Gastrocnemius medialis (tissue), 4 donors: ENCODE measurements at regions of chr1 and their contacts with region 1.

Region 1: GRCh38 chr1:117534995-117535467 is 70.8 kb upstream of the TENT5C start:
- DNase-seq: peak in 1 of 2 donors; percentile 22
- ATAC-seq: peak; percentile 92 to 96
- H3K4me3 ChIP-seq: no peak overlapping the region
- H3K27ac ChIP-seq: no peak overlapping the region
- H3K4me1 ChIP-seq: peaks cover 4% of the 10 kb centered on the region in 2 donors
- H3K27me3 ChIP-seq: no peaks in the 10 kb centered on the region
- CTCF ChIP-seq: peak; percentile 58 to 78 (median 76)
- POLR2A ChIP-seq: no peak

Region 2: GRCh38 chr1:116806245-116806644 is 728.8 kb before region 1 on chr1:
- in situ Hi-C with region 1: no loop called
- intact Hi-C with region 1: no loop called
- DNase-seq: no peak
- ATAC-seq: no peak
- H3K4me3 ChIP-seq: no peak overlapping the region
- H3K27ac ChIP-seq: no peak overlapping the region
- H3K4me1 ChIP-seq: peaks cover 0 to 8% of the 10 kb centered on the region in 2 donors
- H3K27me3 ChIP-seq: no peaks in the 10 kb centered on the region
- CTCF ChIP-seq: no peak
- POLR2A ChIP-seq: no peak

Region 3: DNA sequence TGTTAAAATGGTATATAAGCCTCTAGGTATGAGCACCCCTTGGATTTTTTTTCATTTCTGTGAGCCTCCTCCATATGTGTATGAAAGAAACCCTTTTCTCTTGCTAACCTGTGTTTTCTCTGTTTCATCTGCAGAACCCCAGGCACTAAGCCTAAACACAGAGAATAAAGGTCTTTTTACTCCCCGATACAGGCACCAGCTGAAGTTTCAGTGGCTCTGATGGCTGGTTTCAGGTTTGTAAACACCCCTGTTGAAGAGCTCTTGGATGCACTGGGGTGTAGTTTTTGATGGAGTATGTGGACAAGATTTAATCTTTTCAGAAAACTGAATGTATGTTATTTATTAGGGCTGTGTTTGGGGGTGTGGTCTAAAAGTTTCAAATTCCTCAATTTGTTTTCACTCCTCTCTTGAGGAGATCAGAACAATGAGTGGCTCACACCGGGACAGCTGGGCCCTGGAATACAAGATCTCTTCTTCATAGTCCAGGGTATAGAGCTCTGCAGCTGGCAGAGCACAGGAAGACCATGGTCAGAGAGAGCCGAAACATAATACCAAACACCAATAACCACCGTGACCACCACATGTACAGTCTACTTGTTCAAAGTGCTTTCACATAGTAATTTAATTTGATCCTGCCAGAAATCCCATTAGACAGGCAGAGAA is 274.1 kb before region 1 on chr1:
- in situ Hi-C with region 1: no loop called
- intact Hi-C with region 1: no loop called
- DNase-seq: no peak
- ATAC-seq: no peak
- H3K4me3 ChIP-seq: no peak overlapping the region
- H3K27ac ChIP-seq: no peak overlapping the region
- H3K4me1 ChIP-seq: no peaks in the 10 kb centered on the region
- H3K27me3 ChIP-seq: no peaks in the 10 kb centered on the region
- CTCF ChIP-seq: no peak
- POLR2A ChIP-seq: no peak

Region 4: GRCh38 chr1:117590271-117590925 is 55.4 kb after region 1 on chr1:
- in situ Hi-C with region 1: no loop called
- intact Hi-C with region 1: loop called (anchors 2 kb)
- DNase-seq: no peak
- ATAC-seq: no peak
- H3K4me3 ChIP-seq: no peak overlapping the region
- H3K27ac ChIP-seq: peak overlapping the region in 1 of 4 donors; percentile 74
- H3K4me1 ChIP-seq: peaks cover 25 to 26% of the 10 kb centered on the region in 2 donors
- H3K27me3 ChIP-seq: no peaks in the 10 kb centered on the region
- CTCF ChIP-seq: no peak
- POLR2A ChIP-seq: no peak

Region 5: DNA sequence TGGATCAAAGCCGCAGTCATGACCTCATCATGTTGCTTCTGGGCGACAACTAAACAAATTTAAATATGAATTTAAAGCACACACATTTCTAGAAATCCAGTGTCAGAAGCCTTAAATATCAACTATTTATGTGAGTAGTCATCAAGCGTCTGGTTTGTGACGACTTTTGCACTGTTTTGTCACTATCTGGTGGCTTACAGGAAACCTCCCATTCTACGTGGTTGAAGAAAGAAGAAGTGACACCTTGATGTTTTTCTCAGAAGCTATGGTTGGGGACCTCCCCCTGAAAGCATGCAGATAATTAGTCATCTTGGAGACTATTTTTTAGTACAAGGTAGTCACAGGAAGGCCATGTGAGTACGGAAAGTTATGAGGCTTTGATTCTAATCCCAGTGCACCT is 129.3 kb after region 1 on chr1:
- in situ Hi-C with region 1: loop called in 1 of 4 experiments (anchors 10 kb)
- intact Hi-C with region 1: no loop called
- DNase-seq: no peak
- ATAC-seq: no peak
- H3K4me3 ChIP-seq: no peak overlapping the region
- H3K27ac ChIP-seq: no peak overlapping the region
- H3K4me1 ChIP-seq: peaks cover 0 to 1% of the 10 kb centered on the region in 2 donors
- H3K27me3 ChIP-seq: no peaks in the 10 kb centered on the region
- CTCF ChIP-seq: no peak
- POLR2A ChIP-seq: no peak

Region 6: DNA sequence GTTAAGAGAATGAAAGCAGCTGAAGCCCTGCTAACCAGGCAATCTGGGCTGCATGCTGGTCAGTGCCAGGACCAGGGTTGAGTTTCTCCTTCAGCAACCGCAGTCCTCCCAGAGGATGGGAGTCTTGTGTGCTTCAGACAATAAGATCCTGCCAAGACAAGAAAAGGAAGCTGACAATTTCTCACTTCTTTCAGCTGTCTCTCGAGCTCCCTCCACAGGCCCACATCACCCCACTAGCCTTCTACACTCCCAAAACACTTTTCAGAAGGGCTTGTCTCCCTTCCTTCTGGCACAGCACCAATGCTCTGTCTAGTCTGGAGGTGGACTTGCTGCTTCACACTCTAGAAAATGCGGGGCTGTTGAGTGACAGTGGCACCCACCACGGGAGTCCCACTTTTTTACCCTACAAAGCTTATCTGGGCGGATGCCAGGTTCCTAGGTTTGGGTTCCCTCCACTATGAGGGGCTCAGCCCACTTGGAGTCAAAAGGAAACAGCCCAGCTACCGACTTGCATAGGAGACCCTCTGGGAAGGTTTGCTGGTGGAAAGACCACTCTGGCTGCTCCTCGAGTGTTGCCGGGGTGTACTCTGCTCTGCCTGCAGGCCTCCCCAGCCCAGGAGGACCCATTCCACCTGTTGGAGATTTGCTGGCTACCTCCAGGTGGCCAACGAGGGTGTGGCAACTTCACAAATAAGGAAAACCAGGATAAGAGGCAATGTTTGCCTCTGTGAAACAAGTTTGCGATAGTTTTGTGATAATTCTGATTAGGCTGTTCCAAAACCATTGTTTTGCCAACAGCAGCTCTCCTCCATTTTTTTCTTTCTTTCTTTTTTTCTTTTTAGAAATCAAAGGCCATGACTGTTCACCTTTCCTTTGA is 139.7 kb after region 1 on chr1:
- in situ Hi-C with region 1: loop called in 1 of 4 experiments (anchors 10 kb)
- intact Hi-C with region 1: loop called (anchors 5 kb)
- DNase-seq: peak in 1 of 2 donors; percentile 55
- ATAC-seq: peak; percentile 18 to 35
- H3K4me3 ChIP-seq: no peak overlapping the region
- H3K27ac ChIP-seq: peak overlapping the region; percentile 84 to 95 (median 94)
- H3K4me1 ChIP-seq: peaks cover 71 to 73% of the 10 kb centered on the region in 2 donors
- H3K27me3 ChIP-seq: no peaks in the 10 kb centered on the region
- CTCF ChIP-seq: peak in 3 of 5 experiments; percentile 12 to 34 (median 20)
- POLR2A ChIP-seq: no peak

Region 7: DNA sequence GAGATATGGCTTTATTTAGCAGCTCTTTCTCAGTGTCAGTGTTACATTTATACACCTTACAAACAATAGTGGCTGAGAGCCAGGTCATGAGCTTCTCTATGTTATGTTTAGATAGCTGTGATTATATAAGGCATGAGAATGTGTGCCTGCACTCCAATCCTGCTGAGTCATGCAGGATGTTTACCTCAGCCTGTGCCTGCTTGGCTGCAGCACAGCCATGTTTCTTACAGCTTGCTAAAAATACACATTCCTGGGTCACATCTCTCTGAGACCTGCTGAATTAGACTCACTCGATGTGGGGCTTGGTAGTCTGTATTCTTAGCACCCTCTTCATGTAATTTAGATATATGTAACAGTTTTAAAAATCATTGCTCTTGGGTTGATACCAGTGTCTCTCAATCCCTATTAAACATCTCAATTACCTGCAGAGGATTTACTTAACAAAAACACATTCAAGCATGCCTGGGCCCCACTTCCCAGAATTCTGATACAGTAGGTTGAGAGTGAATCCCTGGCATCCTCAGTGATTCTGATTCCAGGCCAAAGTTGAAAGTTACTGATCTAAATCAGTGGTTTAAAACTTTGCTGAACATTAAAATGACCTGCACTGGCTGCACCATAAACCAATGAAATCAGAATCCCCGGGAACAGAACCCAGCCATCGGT is 286.9 kb after region 1 on chr1:
- in situ Hi-C with region 1: no loop called
- intact Hi-C with region 1: no loop called
- DNase-seq: peak; percentile 42 to 55
- ATAC-seq: peak; percentile 66 to 80
- H3K4me3 ChIP-seq: peak overlapping the region in 2 of 4 donors; percentile 6 to 20
- H3K27ac ChIP-seq: peak overlapping the region; percentile 85 to 90 (median 86)
- H3K4me1 ChIP-seq: peaks cover 26 to 28% of the 10 kb centered on the region in 2 donors
- H3K27me3 ChIP-seq: no peaks in the 10 kb centered on the region
- CTCF ChIP-seq: no peak
- POLR2A ChIP-seq: no peak

Region 8: DNA sequence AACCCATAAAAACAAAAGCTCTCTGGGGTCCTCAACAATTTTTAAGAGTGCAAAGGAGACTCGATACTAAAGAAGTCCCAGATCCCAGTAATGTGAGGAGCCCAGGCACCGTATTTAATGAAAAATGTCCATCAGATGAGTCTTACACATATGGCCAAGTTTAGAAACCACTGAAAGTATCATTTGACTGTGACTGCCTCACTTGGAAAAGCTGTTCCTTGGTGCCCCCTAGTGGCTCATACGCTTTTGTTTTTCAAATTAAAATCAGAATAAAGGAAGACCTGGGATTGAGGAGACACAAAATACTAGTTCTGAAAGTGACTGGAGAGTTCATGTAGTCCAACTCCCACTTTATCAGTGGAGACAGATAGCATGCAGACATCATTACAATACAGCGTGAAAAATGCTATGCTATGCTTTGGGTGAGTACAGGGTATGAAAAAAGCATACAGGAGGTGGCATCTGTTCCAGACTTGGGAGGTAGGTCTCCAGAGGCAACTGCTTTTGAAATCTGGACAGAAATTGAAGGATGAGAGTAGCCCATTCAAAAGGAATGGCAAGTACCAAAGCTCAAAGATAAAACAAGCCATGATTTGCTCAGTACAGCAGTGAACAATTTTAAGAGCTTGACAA is 360.6 kb after region 1 on chr1:
- in situ Hi-C with region 1: loop called in 1 of 4 experiments (anchors 25 kb)
- intact Hi-C with region 1: loop called (anchors 10 kb)
- DNase-seq: peak; percentile 46 to 48
- ATAC-seq: peak; percentile 90 to 96
- H3K4me3 ChIP-seq: no peak overlapping the region
- H3K27ac ChIP-seq: peak overlapping the region; percentile 12 to 56 (median 46)
- H3K4me1 ChIP-seq: peaks cover 0 to 9% of the 10 kb centered on the region in 2 donors
- H3K27me3 ChIP-seq: no peaks in the 10 kb centered on the region
- CTCF ChIP-seq: peak; percentile 40 to 76 (median 64)
- POLR2A ChIP-seq: no peak